ENCODE measurements at regions of chr11 and their contacts with region 1.

Region 1: GRCh38 chr11:32792948-32793475 is 1.4 kb downstream of the CCDC73 start:
- DNase-seq: peak; percentile 24 to 51
- ATAC-seq: peak in 6 of 8 donors; percentile 20 to 79 (median 58)
- H3K4me3 ChIP-seq: peak overlapping the region in 5 of 10 donors; percentile 0 to 21 (median 12)
- H3K27ac ChIP-seq: no peak overlapping the region
- H3K4me1 ChIP-seq: peaks cover 0 to 9% (median 0%) of the 10 kb centered on the region in 9 donors
- H3K27me3 ChIP-seq: peaks cover 0 to 20% (median 6%) of the 10 kb centered on the region in 7 donors
- CTCF ChIP-seq: peak; percentile 43 to 79 (median 72)

Region 2: DNA sequence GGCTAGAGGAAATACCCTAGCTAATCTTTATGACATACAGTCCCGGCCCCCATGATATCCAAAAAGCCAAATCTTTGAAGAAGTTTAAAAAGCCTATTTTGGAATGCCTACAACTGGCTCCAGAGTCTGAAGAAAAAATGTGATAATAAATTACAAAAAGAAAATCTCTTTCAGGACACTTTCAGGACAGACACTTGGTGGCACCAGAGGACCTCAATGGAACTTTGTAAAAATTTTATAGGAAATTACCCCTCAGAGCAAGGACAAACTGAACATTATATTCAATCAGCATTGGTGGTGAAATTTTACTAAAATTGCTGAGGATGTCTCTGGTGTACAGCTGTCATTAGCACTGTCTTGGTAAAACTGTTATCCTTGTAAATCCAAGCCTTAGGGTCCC is 79.5 kb before region 1 on chr11:
- intact Hi-C with region 1: loop called in 2 of 10 experiments (anchors 2 to 10 kb)
- DNase-seq: no peak
- ATAC-seq: no peak
- H3K4me3 ChIP-seq: no peak overlapping the region
- H3K27ac ChIP-seq: no peak overlapping the region
- H3K4me1 ChIP-seq: no peaks in the 10 kb centered on the region
- H3K27me3 ChIP-seq: peaks cover 0 to 36% (median 7%) of the 10 kb centered on the region in 7 donors
- CTCF ChIP-seq: peak in 6 of 9 donors; percentile 16 to 39 (median 25)

Measured in heart right ventricle (tissue), 16 donors.